Activated B cell treated with CpG ODN at 0.5 μM for 24 hours (primary cell): ENCODE measurements at regions of chr12 and their contacts with region 1.

Region 1: DNA sequence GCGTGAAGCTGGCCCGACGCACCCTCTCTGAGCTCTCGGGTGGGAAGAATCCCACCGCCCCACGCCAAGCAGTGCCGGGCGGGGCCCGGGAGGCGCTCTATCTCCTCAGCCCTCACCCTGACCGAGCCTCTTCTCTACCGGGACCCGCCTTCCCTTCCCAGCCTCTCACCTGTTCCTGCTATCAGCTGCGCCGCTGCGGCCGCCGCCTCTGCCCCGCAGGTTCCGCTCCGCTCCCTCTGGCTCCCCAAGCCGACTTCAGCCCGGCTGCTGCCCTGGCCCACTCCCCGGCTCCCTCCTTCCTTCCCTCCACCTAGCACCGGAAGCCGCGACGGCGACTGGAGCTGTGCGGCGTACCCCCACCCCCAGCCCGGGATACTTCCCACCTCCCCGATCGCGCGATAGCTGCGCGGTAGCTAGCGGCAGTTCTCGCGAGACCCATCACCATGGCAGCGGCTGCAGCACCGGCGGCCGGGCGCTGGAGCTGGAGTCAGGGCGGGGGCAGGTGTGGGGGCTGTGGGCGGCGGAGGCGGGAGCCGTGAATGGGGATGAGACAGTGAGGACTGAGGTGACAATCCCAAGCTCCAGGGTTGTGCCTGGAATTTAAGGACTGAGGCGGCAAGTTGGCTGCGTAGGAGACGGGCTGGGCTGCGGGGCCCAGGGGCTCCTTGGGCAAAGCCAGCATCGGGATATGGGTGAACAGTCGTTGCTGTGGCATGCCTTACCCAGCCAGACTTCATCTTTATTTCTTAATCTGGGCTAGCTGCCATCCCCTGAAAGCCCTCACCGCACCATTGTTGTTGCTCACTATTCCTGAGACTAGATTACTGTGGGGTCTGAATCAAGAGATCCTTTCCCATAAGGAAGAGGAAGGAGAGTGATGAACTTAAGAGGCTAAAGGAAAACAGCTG is at the start of gene ARF3:
- DNase-seq: peak; percentile 88
- ATAC-seq: peak; percentile 95
- H3K4me3 Mint-ChIP-seq: peak within 1 kb of the TSS; percentile 99
- H3K27ac Mint-ChIP-seq: peak within 1 kb of the TSS; percentile 91
- H3K4me1 Mint-ChIP-seq: peaks cover 41% of the 10 kb centered on the region
- H3K27me3 Mint-ChIP-seq: peaks cover 8% of the 10 kb centered on the region
- CTCF ChIP-seq: no peak
- total RNA-seq, gene ARF3: 113 and 119 TPM in 2 replicates

Region 2: DNA sequence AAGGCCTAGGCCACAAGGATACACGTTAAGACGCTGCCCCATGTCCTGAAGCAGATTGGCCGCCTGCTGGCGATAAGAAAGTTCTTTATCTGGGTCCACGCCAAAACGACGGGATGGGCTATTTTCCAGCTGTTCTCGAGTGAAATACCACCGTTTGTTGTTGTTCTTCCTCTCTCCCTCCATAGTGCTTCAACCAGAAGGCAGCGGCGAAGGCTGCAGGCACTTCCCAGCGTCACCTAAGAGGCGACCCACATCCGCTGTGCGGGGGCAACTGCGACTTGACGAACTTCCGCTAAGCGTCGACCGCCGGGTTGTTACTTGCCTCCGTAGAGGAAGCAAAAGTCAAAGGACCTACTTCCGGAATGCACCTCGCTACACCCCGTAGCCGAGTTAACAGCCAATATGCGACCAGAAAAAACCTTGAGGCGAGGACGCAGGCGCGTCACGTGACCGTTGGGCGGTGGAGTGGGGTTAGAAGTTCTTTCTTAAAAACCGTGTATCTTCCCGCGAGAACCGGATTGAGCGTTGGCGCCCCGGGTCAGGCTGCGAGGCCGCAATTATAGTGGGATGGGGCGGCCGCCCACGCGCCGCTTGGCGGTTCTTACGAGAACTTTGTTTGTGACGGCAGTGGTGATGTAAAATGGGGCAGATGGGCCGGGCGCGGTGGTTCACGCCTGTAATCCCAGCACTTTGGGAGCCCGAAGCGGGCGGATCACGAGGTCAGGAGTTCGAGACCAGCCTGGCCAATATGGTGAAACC is 240.7 kb before region 1 on chr12 and contains the start of gene CCNT1:
- CTCF ChIA-PET with region 1: no interaction called
- POLR2A ChIA-PET with region 1: no interaction called
- intact Hi-C with region 1: loop called (anchors 10 kb)
- DNase-seq: peak; percentile 92
- ATAC-seq: peak; percentile 91
- H3K4me3 Mint-ChIP-seq: peak within 1 kb of the TSS; percentile 87
- H3K27ac Mint-ChIP-seq: peak within 1 kb of the TSS; percentile 97
- H3K4me1 Mint-ChIP-seq: peaks cover 39% of the 10 kb centered on the region
- H3K27me3 Mint-ChIP-seq: peaks cover 2% of the 10 kb centered on the region
- CTCF ChIP-seq: no peak
- total RNA-seq, gene CCNT1: 48.9 and 49.6 TPM in 2 replicates

Region 3: GRCh38 chr12:48936379-48936979 is 20.9 kb before region 1 on chr12:
- CTCF ChIA-PET with region 1: interaction called, 5 read pairs
- POLR2A ChIA-PET with region 1: interaction called, 7 read pairs
- intact Hi-C with region 1: loop called (anchors 2 kb)
- DNase-seq: peak; percentile 68
- ATAC-seq: peak; percentile 74
- H3K4me3 Mint-ChIP-seq: no peak overlapping the region
- H3K27ac Mint-ChIP-seq: no peak overlapping the region
- H3K4me1 Mint-ChIP-seq: peaks cover 36% of the 10 kb centered on the region
- H3K27me3 Mint-ChIP-seq: no peaks in the 10 kb centered on the region
- CTCF ChIP-seq: peak; percentile 26

Region 4: DNA sequence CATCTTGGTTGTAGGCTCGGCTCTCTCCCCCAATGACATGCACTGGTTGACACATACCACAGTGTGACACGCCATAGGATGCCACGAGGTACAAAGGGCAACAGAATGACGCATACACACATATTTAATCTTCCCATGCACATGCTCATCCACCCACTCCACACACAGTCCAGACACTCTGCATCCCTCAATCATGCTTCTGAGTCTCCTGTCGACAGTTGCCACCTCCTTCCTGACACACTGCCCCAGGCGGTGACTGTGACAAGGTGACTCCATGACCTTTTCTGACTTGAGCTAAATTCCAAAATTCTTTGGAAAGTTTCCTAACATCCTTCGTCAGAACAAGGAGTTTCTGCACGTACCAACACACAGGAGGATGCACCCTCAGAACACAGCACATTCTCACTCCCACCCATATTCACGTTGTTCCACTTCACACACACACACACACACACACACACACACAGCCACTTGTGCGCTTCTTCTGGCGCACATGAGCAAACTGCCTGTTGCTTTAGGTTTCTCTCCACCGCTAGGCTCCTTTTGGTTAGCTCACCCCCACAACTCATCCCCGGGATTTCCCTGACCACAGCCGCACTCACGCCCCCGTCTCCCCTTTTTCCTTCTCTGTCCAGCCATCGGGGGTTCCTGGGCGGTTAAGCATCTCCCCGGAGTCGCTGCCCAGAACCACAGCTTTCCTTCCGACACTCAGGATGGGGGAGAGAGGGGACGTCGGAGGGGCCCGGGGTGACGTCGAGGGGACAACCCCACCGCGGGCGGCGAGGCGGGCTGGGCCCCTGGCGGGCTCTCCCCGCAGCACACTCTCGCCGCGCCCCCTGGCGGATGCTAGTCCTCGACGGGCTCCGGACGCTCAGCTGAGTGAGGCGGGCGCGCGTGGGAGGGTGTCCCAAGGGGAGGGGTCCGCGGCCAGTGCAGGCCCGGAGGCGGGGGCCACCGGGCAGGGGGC is 20.2 kb after region 1 on chr12:
- CTCF ChIA-PET with region 1: interaction called, 13 read pairs
- POLR2A ChIA-PET with region 1: interaction called, 10 read pairs
- intact Hi-C with region 1: loop called (anchors 1 kb)
- DNase-seq: peak; percentile 79
- ATAC-seq: peak; percentile 72
- H3K4me3 Mint-ChIP-seq: peak overlapping the region; percentile 68
- H3K27ac Mint-ChIP-seq: peak overlapping the region; percentile 64
- H3K4me1 Mint-ChIP-seq: peaks cover 42% of the 10 kb centered on the region
- H3K27me3 Mint-ChIP-seq: peaks cover 50% of the 10 kb centered on the region
- CTCF ChIP-seq: peak; percentile 45

Region 5: GRCh38 chr12:49018261-49019119 is 61.1 kb after region 1 on chr12 and contains the start of gene PRKAG1:
- CTCF ChIA-PET with region 1: interaction called, 3 read pairs
- POLR2A ChIA-PET with region 1: no interaction called
- intact Hi-C with region 1: loop called (anchors 1 kb)
- DNase-seq: peak; percentile 97
- ATAC-seq: peak; percentile 86
- H3K4me3 Mint-ChIP-seq: peak within 1 kb of the TSS; percentile 93
- H3K27ac Mint-ChIP-seq: peak within 1 kb of the TSS; percentile 98
- H3K4me1 Mint-ChIP-seq: peaks cover 31% of the 10 kb centered on the region
- H3K27me3 Mint-ChIP-seq: no peaks in the 10 kb centered on the region
- CTCF ChIP-seq: no peak
- total RNA-seq, gene PRKAG1: 55.3 and 70.5 TPM in 2 replicates